Mammary epithelial cell (primary cell): ENCODE measurements at regions of chr16 and their contacts with region 1.

Region 1: GRCh38 chr16:3282730-3283524 is at the start of gene ZNF263:
- DNase-seq: peak; percentile 98
- H3K4me3 ChIP-seq: peak within 1 kb of the TSS; percentile 86 to 98 (median 91)
- H3K27ac ChIP-seq: peak within 1 kb of the TSS; percentile 96
- H3K4me1 ChIP-seq: peaks cover 12% of the 10 kb centered on the region
- H3K27me3 ChIP-seq: no peaks in the 10 kb centered on the region
- CTCF ChIP-seq: no peak
- total RNA-seq, gene ZNF263: 23.7 to 54.8 TPM

Region 2: DNA sequence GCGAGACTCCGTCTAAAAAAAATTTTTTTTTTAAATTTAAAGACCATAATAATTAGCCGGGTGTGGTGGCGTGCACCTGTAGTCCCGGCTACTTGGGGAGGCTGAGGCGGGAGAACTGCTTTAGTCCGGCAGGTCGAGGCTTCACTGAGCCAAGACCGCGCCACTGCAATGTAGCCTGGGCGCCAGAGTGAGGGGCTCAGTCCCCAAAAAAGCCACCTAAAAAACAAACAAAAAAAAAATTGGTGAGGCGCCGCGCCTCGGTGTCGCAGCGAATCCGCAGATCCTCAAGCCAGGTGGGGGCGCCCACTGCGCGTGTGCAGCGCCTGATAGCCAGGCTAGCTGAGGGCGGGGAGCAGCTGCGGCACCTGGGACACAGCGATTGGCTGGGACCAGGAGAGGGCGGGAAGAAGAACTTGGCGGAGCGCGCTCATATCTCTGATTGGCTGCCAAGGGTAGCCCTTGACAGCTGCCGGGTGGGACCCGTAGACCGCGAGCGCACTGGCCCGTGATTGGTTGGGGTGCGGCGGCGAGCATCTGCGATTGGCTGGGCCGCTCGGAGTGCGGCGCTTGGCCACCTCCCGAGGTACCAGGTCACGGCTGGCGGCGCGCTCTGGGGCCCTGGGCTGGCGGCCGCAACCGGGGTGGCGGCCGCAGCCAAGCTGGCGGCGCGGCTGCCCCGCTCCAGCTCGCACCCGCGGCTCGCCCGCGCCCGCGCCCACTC is 279.2 kb before region 1 on chr16:
- CTCF ChIA-PET with region 1: no interaction called
- dilution Hi-C with region 1: no loop called
- in situ Hi-C with region 1: no loop called
- intact Hi-C with region 1: no loop called
- DNase-seq: peak; percentile 99
- H3K4me3 ChIP-seq: peak overlapping the region in 2 of 3 experiments; percentile 9 to 39
- H3K27ac ChIP-seq: no peak overlapping the region
- H3K4me1 ChIP-seq: no peaks in the 10 kb centered on the region
- H3K27me3 ChIP-seq: no peaks in the 10 kb centered on the region
- CTCF ChIP-seq: peak; percentile 23 to 69

Region 3: DNA sequence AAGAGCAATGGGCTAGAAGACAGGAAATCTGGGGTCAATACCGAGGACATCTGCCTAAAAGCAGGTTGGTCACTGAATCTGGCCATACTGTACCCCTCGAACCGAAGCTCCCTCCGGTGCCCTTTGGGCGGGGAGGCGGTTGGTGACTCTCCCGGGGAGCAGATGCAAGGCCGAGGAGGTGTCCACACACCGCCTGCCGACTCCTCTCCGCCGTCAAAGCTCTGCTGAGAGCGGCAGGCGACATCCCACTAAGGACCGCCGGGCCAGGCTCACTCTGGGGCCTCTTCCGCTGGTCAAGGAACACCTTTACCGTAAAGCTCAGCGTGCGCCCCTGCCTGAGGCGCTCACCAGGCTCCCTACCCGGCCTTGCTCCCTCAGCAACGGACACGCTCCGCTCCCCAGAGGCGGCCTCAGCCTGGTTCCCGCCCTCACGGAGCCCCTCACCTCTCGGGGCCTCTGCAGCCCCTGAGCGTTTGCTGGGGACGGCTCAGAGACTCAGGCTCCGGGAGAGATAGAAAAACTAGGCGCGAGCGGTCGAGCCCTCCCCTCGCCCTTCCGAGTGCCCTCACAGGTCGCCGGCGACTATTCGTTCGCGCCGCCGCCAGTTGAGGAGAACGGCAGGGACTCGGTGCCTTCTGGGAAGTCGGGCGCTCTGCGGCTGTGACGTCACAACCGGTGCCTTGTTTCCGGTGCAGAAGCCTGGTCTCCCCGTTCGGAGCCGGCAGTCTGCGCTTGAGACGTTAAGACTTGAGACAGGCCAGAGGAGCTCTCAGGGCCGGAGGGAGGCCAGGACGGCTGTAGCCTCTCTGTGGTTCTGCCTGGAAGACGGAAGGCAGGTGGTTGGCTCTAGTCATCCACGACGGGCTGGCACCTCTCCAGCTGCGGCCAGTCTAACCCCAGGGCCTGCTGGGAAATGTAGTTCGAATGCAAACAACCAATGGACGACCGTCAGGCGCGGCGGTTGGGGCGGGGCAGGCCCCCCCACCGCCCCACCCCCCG is 48.1 kb before region 1 on chr16 and contains the start of gene ZNF200:
- CTCF ChIA-PET with region 1: no interaction called
- dilution Hi-C with region 1: loop called (anchors 5 kb)
- in situ Hi-C with region 1: no loop called
- intact Hi-C with region 1: loop called (anchors 2 kb)
- DNase-seq: peak; percentile 95
- H3K4me3 ChIP-seq: peak within 1 kb of the TSS; percentile 81 to 90 (median 82)
- H3K27ac ChIP-seq: peak within 1 kb of the TSS; percentile 62
- H3K4me1 ChIP-seq: peaks cover 4% of the 10 kb centered on the region
- H3K27me3 ChIP-seq: no peaks in the 10 kb centered on the region
- CTCF ChIP-seq: no peak
- total RNA-seq, gene ZNF200: 10.0 to 10.5 TPM

Region 4: DNA sequence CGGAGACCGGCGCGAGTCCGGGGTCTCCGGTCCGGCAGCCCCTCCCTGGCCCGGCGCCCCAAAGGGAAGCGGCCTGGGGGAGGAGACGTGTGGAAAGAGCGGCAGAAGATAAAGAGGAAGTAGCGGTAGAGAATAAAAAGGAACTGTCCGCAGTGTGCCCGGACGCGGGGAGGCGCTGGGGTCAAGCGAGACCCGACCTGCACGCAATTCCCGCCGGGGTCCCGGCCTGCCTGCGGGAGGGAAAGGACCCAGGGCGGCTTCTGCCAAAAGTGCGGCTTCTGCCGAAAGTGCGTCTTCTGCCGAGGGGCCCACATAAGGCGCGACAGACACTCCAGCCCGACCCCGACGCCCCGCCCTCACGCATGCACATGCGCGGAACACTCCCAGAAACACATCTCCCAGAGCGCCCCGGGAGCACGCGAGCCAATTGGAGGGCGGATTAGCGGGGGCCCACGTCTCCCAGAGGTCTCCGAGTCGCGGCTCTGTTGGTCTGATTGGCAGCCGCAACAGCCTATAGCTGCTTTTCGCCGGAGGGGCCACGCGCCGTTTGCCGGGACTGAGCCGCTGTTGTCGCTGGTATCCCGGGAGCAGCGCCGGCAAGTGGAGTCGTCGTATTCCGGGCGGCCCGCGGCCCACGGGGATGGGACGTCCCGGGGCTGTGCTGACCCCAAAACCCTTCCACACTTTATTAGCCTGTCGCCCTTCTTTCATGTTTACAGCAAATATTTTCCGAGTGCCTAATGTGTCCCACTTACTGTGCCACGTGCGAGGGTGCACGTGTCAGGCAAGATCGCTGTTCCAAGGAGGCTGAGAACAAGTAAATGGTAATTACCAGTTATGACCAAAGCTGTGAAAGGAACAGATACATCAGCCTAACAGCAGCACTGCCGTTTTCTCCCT is 18.5 kb before region 1 on chr16:
- CTCF ChIA-PET with region 1: no interaction called
- dilution Hi-C with region 1: no loop called
- in situ Hi-C with region 1: no loop called
- intact Hi-C with region 1: loop called (anchors 1 kb)
- DNase-seq: peak; percentile 98
- H3K4me3 ChIP-seq: peak overlapping the region; percentile 74 to 82 (median 77)
- H3K27ac ChIP-seq: peak overlapping the region; percentile 49
- H3K4me1 ChIP-seq: peaks cover 7% of the 10 kb centered on the region
- H3K27me3 ChIP-seq: no peaks in the 10 kb centered on the region
- CTCF ChIP-seq: peak; percentile 7 to 34

Region 5: GRCh38 chr16:3305109-3306068 is 22.5 kb after region 1 on chr16 and contains the starts of genes TIGD7 and ZNF75A:
- CTCF ChIA-PET with region 1: no interaction called
- dilution Hi-C with region 1: no loop called
- in situ Hi-C with region 1: no loop called
- intact Hi-C with region 1: loop called (anchors 2 kb)
- DNase-seq: peak; percentile 87
- H3K4me3 ChIP-seq: peak within 1 kb of the TSS; percentile 60 to 67 (median 62)
- H3K27ac ChIP-seq: peak within 1 kb of the TSS; percentile 45
- H3K4me1 ChIP-seq: peaks cover 6% of the 10 kb centered on the region
- H3K27me3 ChIP-seq: no peaks in the 10 kb centered on the region
- CTCF ChIP-seq: peak in 1 of 2 donors; percentile 17
- total RNA-seq, gene TIGD7: 1.9 to 2.3 TPM
- total RNA-seq, gene ZNF75A: 13.7 to 24.6 TPM

Region 6: GRCh38 chr16:3503523-3503922 is 220.6 kb after region 1 on chr16:
- CTCF ChIA-PET with region 1: no interaction called
- dilution Hi-C with region 1: no loop called
- in situ Hi-C with region 1: no loop called
- intact Hi-C with region 1: loop called (anchors 2 kb)
- DNase-seq: peak; percentile 62
- H3K4me3 ChIP-seq: no peak overlapping the region
- H3K27ac ChIP-seq: peak overlapping the region; percentile 65
- H3K4me1 ChIP-seq: peaks cover 18% of the 10 kb centered on the region
- H3K27me3 ChIP-seq: no peaks in the 10 kb centered on the region
- CTCF ChIP-seq: no peak